Ascending aorta (tissue), 2 donors: ENCODE measurements at regions of chr16 and their contacts with region 1.

Region 1: GRCh38 chr16:67191995-67192681 is at the start of gene E2F4:
- DNase-seq: peak; percentile 49 to 94
- H3K4me3 ChIP-seq: peak within 1 kb of the TSS; percentile 93 to 99
- H3K27ac ChIP-seq: peak within 1 kb of the TSS; percentile 79 to 87
- H3K4me1 ChIP-seq: peaks cover 13 to 14% of the 10 kb centered on the region in 2 donors
- H3K27me3 ChIP-seq: no peaks in the 10 kb centered on the region
- CTCF ChIP-seq: peak in 1 of 3 experiments; percentile 11
- total RNA-seq, gene E2F4: 114 TPM

Region 2: GRCh38 chr16:67173808-67174705 is 18.1 kb before region 1 on chr16:
- intact Hi-C with region 1: no loop called
- DNase-seq: peak; percentile 84 to 96
- H3K4me3 ChIP-seq: peak overlapping the region; percentile 49 to 67
- H3K27ac ChIP-seq: peak overlapping the region; percentile 93 to 95
- H3K4me1 ChIP-seq: peaks cover 24 to 41% of the 10 kb centered on the region in 2 donors
- H3K27me3 ChIP-seq: no peaks in the 10 kb centered on the region
- CTCF ChIP-seq: peak; percentile 19 to 48 (median 34)

Region 3: GRCh38 chr16:67226804-67227557 is 34.8 kb after region 1 on chr16 and contains the start of gene TMEM208:
- intact Hi-C with region 1: loop called (anchors 2 kb)
- DNase-seq: peak; percentile 95 to 99
- H3K4me3 ChIP-seq: peak within 1 kb of the TSS; percentile 87 to 96
- H3K27ac ChIP-seq: peak within 1 kb of the TSS; percentile 80 to 88
- H3K4me1 ChIP-seq: peaks cover 6 to 15% of the 10 kb centered on the region in 2 donors
- H3K27me3 ChIP-seq: no peaks in the 10 kb centered on the region
- CTCF ChIP-seq: peak in 1 of 3 experiments; percentile 23
- total RNA-seq, gene TMEM208: 8.3 TPM

Region 4: DNA sequence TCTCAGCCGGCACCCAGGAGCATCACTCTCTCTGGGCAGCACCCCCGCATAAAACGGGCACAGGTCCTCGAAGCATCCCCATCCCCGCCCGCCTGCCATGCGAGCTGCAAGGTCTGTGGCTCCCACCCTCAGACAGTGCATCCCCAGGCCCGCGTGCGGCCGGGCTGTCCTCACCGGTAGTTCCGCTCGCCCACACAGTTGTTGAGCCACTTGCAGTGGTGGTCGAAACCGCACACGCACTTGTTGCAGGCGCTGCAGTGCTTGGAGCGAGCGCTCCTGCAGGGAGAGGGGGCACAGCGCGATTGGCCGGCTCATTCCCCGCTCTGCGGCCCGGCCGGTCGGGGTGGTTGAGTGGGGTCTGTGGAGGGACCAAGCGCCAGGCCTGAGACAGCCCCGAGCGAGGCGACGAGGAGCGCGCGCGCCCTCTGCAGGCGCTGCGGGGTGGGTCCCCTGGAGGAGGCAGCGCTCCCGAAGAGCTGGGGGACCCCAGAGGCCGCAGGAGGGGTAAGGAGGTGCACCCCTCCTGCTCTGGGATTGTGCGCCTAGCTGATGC is 207.1 kb after region 1 on chr16:
- intact Hi-C with region 1: no loop called
- DNase-seq: no peak
- H3K4me3 ChIP-seq: no peak overlapping the region
- H3K27ac ChIP-seq: no peak overlapping the region
- H3K4me1 ChIP-seq: peaks cover 4 to 16% of the 10 kb centered on the region in 2 donors
- H3K27me3 ChIP-seq: peaks cover 6% of the 10 kb centered on the region
- CTCF ChIP-seq: peak; percentile 55 to 77 (median 65)